Natural killer cell (primary cell): ENCODE measurements at regions of chr10 and their contacts with region 1.

Region 1: DNA sequence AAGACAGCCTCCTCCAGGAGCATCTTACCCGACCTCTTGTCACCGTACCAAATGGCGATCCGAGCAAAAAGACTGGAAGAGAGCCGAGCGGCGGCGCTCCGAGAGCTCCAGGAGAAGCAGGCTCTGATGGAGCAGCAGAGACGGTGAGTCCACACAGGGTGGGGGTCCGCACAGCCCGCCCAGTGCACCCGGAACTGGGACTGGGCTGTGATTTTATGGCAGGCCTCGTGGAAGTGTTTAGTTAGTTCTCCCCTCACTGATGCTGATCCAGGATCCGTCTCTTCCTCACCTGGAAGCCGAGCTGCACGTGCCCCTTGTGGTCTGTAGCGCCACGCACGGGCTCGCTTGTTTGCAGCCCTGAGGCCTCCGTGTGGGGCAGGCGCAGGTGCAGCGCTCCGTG is 19.6 kb downstream of the LRRC27 start:
- DNase-seq: no peak
- ATAC-seq: no peak
- H3K4me3 ChIP-seq: no peak overlapping the region
- H3K4me3 Mint-ChIP-seq: no peak overlapping the region
- H3K27ac ChIP-seq: no peak overlapping the region
- H3K27ac Mint-ChIP-seq: no peak overlapping the region
- H3K4me1 ChIP-seq: no peaks in the 10 kb centered on the region
- H3K4me1 Mint-ChIP-seq: peaks cover 0 to 8% of the 10 kb centered on the region in 2 donors
- H3K27me3 ChIP-seq: no peaks in the 10 kb centered on the region
- H3K27me3 Mint-ChIP-seq: no peaks in the 10 kb centered on the region
- CTCF ChIP-seq: no peak

Region 2: GRCh38 chr10:132223156-132223590 is 128.4 kb before region 1 on chr10:
- intact Hi-C with region 1: loop called (anchors 1 kb)
- DNase-seq: peak; percentile 54 to 76
- ATAC-seq: peak; percentile 67 to 95 (median 94)
- H3K4me3 ChIP-seq: no peak overlapping the region
- H3K4me3 Mint-ChIP-seq: no peak overlapping the region
- H3K27ac ChIP-seq: no peak overlapping the region
- H3K27ac Mint-ChIP-seq: no peak overlapping the region
- H3K4me1 ChIP-seq: peaks cover 23% of the 10 kb centered on the region
- H3K4me1 Mint-ChIP-seq: peaks cover 0 to 10% of the 10 kb centered on the region in 2 donors
- H3K27me3 ChIP-seq: no peaks in the 10 kb centered on the region
- H3K27me3 Mint-ChIP-seq: no peaks in the 10 kb centered on the region
- CTCF ChIP-seq: peak; percentile 56

Region 3: DNA sequence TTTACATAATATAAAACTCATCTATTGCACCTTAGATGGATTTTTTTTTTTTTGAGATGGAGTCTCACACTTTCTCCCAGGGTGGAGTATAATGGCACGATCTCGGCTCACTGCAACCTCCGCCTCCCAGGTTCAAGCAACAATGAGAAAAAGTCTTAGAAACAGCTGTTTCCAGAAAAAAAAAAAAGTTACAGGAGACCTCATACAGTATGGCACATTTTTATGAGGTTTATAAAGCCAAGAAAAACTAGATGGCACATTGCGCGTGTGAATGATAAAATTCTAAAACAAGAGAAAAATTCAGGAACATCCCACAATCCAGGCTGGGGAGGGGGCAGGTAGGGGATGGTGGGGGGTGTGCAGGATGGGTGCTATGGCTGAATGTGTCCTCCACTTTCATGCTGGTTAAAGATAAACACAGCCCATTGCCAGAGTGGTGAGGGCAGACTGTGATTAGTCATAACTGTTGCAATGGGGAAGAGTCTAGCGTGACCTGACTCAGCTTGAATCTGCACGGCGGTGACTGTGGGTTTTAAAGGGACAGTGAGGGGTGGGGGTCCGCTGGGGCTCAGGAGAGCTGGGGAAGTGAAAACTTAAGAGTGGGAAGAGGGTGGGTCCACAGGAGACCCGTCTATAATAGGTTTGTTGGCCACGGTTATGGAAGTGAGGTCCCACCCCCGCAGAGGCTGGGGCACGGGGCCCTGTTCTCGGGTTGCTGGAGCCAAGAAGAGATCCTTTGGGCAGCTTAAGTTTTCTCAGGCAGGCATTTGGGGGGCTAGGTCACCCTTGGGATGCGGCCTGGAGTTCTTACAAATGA is 31.6 kb before region 1 on chr10:
- intact Hi-C with region 1: no loop called
- DNase-seq: no peak
- ATAC-seq: peak; percentile 44 to 60 (median 49)
- H3K4me3 ChIP-seq: no peak overlapping the region
- H3K4me3 Mint-ChIP-seq: no peak overlapping the region
- H3K27ac ChIP-seq: no peak overlapping the region
- H3K27ac Mint-ChIP-seq: no peak overlapping the region
- H3K4me1 ChIP-seq: peaks cover 3% of the 10 kb centered on the region
- H3K4me1 Mint-ChIP-seq: peaks cover 0 to 15% of the 10 kb centered on the region in 2 donors
- H3K27me3 ChIP-seq: no peaks in the 10 kb centered on the region
- H3K27me3 Mint-ChIP-seq: no peaks in the 10 kb centered on the region
- CTCF ChIP-seq: no peak